ENCODE measurements at regions of chr18 and their contacts with region 1.

Region 1: DNA sequence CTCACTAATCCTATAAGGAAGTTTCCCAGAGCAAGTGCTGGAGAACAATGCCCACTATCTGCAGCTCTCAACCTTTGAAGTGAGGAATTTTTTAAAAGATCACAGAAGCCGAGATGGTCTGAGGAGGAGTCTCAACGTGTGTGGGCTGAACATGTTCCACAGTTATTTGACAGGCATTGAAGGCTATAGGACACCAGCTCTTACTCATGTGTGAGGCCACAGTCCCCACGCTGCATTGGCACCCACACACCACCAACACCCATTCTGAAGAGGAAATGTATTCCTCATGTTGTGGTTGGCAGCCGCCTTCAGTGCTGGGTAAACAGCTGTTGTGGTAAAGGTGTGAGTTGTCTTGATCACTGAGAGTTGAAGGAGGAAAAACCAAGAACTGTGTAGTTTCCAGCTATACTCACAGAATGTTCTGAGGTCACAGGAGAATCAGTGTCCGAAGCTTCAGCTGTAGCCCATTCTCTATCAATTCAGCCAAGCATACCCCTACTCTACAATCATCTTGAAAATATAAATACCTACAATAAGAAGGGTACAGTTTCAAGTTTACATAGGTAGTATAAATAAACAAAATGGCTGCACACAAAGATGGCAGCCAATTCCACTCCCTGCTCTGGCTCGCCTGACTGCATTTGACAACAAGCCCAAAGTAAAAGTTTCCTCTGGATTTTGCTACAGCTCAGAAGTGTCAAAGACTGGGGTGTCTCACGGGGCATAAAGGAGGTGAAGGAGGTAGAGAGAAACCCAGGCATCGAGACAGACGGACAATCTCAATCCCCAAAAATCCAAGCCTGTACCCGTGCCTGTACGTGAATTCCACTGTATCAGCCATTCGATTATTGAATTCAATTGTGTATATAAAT is 12.1 kb downstream of the CD226 start:
- DNase-seq: peak; percentile 92
- H3K4me3 Mint-ChIP-seq: no peak overlapping the region
- H3K27ac Mint-ChIP-seq: no peak overlapping the region
- H3K4me1 Mint-ChIP-seq: peaks cover 41% of the 10 kb centered on the region
- H3K27me3 Mint-ChIP-seq: no peaks in the 10 kb centered on the region

Region 2: GRCh38 chr18:69734536-69734935 is 201.0 kb before region 1 on chr18:
- CTCF ChIA-PET with region 1: no interaction called
- intact Hi-C with region 1: loop called (anchors 5 kb)
- DNase-seq: no peak
- H3K4me3 Mint-ChIP-seq: no peak overlapping the region
- H3K27ac Mint-ChIP-seq: no peak overlapping the region
- H3K4me1 Mint-ChIP-seq: no peaks in the 10 kb centered on the region
- H3K27me3 Mint-ChIP-seq: no peaks in the 10 kb centered on the region

Region 3: DNA sequence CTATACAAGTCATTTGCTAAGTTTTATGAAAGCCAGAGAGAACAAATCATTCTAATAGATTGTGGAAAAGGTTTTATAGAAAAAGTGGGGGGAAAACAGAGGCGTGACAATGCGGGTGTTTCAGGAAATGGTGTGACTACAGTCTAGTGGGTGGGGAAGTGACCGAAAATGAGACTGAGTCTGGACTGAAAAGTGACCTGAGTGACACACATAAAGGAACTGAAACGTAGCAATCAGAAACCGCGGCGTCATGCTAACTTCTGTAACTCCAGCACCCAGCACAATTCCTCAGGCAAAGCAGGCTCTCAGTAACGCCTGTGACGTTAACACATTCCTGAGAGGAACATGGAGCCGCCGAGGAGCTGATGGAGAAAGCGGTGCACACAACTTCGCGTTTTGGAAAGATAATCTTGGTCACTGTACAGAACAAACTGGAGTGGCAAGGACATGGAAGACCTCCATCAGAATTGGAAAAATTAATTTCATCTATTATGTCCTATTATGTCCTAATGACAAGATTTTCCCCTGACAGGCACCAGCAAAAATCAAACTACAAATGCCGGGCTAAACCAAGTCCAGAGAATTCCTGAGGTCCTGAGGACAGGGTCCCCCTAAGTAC is 13.5 kb after region 1 on chr18:
- CTCF ChIA-PET with region 1: interaction called, 18 read pairs
- intact Hi-C with region 1: loop called (anchors 1 kb)
- DNase-seq: peak; percentile 83
- H3K4me3 Mint-ChIP-seq: no peak overlapping the region
- H3K27ac Mint-ChIP-seq: no peak overlapping the region
- H3K4me1 Mint-ChIP-seq: peaks cover 46% of the 10 kb centered on the region
- H3K27me3 Mint-ChIP-seq: no peaks in the 10 kb centered on the region

Region 4: DNA sequence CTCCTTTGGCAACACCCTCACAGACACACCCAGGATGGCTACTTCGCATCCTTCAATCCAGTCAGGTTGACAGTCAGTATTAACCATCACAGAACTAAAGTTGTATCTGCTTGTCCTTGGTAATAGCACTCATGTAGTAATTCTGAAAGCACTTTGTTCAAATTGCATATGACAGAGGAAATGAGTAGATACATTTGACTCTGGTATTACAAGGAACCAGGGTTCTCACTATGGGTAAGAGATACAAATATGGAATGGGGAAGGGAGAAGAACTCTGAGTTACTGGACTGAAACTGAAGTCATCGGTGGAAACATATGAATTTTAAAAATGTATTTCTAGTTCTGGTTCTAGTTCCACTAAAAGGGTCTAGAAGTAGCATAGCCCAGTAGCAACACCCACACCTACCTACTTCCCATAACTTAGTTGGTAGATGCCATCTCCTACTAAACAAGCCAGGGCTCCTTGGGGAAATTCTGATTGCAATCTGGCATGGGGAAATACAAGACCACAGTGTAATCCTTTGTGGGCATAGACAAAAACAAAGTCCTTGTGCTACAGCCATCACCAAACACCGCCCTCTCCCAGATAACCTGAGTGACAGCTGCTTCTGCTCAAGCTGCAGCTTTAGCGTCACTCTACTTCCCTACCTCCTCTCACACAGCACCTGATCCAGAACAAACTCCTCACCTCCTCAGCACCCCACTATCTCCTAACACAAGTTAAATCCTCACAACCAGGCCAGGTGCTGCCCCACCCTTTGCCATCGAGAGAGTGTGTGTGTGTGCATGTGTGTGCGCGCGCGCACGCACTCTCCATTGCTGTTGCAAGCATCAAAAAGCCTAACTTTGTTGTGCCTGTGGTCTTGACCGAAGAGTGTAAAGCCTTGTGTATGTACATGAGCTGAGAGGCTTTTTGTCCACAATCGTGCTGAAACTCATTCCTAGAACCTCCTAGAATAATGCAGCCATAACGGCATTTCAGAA is 43.5 kb after region 1 on chr18:
- CTCF ChIA-PET with region 1: no interaction called
- intact Hi-C with region 1: loop called (anchors 1 kb)
- DNase-seq: peak; percentile 27
- H3K4me3 Mint-ChIP-seq: no peak overlapping the region
- H3K27ac Mint-ChIP-seq: peak overlapping the region; percentile 37
- H3K4me1 Mint-ChIP-seq: peaks cover 44% of the 10 kb centered on the region
- H3K27me3 Mint-ChIP-seq: no peaks in the 10 kb centered on the region

Measured in activated naive CD4-positive, alpha-beta T cell treated with anti-CD3 and anti-CD28 coated beads for 36 hours (primary cell).